ENCODE measurements at regions of chr20 and their contacts with region 1.

Region 1: GRCh38 chr20:36447101-36447500 is 94.2 kb upstream of the MYL9 start:
- DNase-seq: no peak
- ATAC-seq: no peak; the same call in 2 of the 3 replicates
- H3K4me3 ChIP-seq: no peak overlapping the region
- H3K27ac ChIP-seq: no peak overlapping the region
- H3K4me1 ChIP-seq: no peaks in the 10 kb centered on the region
- H3K27me3 ChIP-seq: peaks cover 0 to 11% of the 10 kb centered on the region in 2 experiments; a peak in 2 of 5 replicates
- CTCF ChIP-seq: no peak
- EP300 ChIP-seq: no peak
- POLR2A ChIP-seq: no peak
- RAD21 ChIP-seq: no peak

Region 2: GRCh38 chr20:35981969-35982368 is 465.1 kb before region 1 on chr20:
- CTCF ChIA-PET with region 1: no interaction called
- POLR2A ChIA-PET with region 1: no interaction called
- in situ Hi-C with region 1: loop called (anchors 10 kb)
- intact Hi-C with region 1: no loop called
- DNase-seq: no peak
- ATAC-seq: peak; percentile 47
- H3K4me3 ChIP-seq: no peak overlapping the region
- H3K27ac ChIP-seq: no peak overlapping the region
- H3K4me1 ChIP-seq: no peaks in the 10 kb centered on the region
- H3K27me3 ChIP-seq: peaks cover 3 to 56% of the 10 kb centered on the region in 2 experiments
- CTCF ChIP-seq: 0 out of 2 replicates have a peak, but pooled peaks have one; percentile 4
- EP300 ChIP-seq: no peak
- POLR2A ChIP-seq: no peak
- RAD21 ChIP-seq: no peak

Region 3: DNA sequence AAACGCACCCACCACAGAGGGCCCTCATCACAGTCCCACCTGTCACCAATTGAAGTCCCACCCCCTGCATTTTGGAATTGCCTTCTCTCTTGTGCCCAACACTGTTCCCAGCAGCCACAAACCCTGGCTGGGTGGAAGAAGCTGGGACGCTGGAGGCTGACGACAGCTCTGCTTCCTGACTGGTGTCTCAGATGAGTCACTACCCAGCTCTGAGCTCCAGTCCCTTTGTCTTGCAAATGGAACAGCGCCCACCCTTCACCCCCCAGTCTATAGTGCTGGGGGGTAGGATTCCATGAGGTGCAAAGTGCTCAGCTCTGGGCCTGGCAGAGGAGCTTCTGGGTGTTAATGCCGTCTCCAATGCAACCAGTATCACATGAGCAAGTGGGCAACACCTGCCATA is 55.6 kb before region 1 on chr20:
- CTCF ChIA-PET with region 1: no interaction called
- POLR2A ChIA-PET with region 1: no interaction called
- in situ Hi-C with region 1: no loop called
- intact Hi-C with region 1: no loop called
- DNase-seq: no peak
- ATAC-seq: no peak
- H3K4me3 ChIP-seq: no peak overlapping the region
- H3K27ac ChIP-seq: no peak overlapping the region
- H3K4me1 ChIP-seq: peaks cover 5% of the 10 kb centered on the region
- H3K27me3 ChIP-seq: peaks cover 0 to 15% of the 10 kb centered on the region in 2 experiments; a peak in 2 of 5 replicates
- CTCF ChIP-seq: no peak
- EP300 ChIP-seq: no peak
- POLR2A ChIP-seq: no peak
- RAD21 ChIP-seq: no peak

Measured in HepG2 (cell line).